B cell (primary cell): ENCODE measurements at regions of chr6 and their contacts with region 1.

Region 1: GRCh38 chr6:88238065-88238464 is 71.9 kb upstream of the CNR1 start:
- DNase-seq: peak; percentile 78
- ATAC-seq: peak; percentile 78
- H3K4me3 ChIP-seq: no peak overlapping the region
- H3K4me3 Mint-ChIP-seq: no peak overlapping the region
- H3K27ac ChIP-seq: no peak overlapping the region
- H3K27ac Mint-ChIP-seq: no peak overlapping the region
- H3K4me1 ChIP-seq: peaks cover 0 to 4% of the 10 kb centered on the region in 2 donors
- H3K4me1 Mint-ChIP-seq: peaks cover 7% of the 10 kb centered on the region
- H3K27me3 ChIP-seq: no peaks in the 10 kb centered on the region
- H3K27me3 Mint-ChIP-seq: no peaks in the 10 kb centered on the region
- CTCF ChIP-seq: peak; percentile 83

Region 2: DNA sequence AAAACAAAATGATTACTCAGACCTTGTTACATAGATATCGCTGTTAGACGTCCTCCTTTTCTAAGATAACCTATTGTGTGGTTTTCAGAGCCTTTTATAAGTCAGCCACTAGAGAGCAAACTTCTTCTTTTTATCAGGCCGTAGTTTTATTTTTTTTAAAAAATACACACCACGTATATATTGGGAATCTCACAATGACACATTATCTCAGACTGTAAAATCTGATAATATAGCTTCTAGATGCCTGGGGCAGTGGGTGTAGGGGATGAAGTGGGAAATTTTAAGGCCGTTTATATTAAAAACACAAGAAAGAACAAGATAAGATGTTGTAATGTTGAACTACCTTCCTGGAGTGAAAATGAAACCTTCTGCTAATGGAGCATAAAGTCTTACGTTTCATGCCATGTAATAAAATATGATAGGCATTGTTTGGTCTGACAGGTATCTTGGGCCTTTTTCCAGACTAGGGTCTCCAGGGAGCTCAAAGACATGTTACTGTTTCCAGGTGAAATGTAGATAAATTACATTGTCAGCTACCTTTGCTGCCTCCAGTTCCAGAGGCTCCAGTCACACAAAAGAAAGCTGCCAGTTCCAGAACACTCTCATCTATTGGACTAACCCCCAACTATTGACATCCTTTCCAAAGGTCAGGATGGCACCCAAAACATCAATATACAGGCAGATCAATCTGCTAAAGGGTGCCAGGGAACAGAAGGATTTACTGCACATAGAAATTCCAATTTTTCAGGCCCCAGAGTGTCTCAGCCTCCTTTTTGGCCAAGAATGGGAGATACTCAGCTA is 405.8 kb before region 1 on chr6:
- CTCF ChIA-PET with region 1: interaction called, 83 read pairs
- POLR2A ChIA-PET with region 1: no interaction called
- intact Hi-C with region 1: loop called (anchors 1 kb)
- DNase-seq: peak; percentile 73
- ATAC-seq: peak; percentile 74
- H3K4me3 ChIP-seq: peak overlapping the region; percentile 42 to 81 (median 64)
- H3K4me3 Mint-ChIP-seq: peak overlapping the region; percentile 89
- H3K27ac ChIP-seq: peak overlapping the region; percentile 74 to 89
- H3K27ac Mint-ChIP-seq: peak overlapping the region; percentile 78
- H3K4me1 ChIP-seq: peaks cover 6 to 7% of the 10 kb centered on the region in 2 donors
- H3K4me1 Mint-ChIP-seq: peaks cover 14% of the 10 kb centered on the region
- H3K27me3 ChIP-seq: no peaks in the 10 kb centered on the region
- H3K27me3 Mint-ChIP-seq: no peaks in the 10 kb centered on the region
- CTCF ChIP-seq: peak; percentile 76

Region 3: DNA sequence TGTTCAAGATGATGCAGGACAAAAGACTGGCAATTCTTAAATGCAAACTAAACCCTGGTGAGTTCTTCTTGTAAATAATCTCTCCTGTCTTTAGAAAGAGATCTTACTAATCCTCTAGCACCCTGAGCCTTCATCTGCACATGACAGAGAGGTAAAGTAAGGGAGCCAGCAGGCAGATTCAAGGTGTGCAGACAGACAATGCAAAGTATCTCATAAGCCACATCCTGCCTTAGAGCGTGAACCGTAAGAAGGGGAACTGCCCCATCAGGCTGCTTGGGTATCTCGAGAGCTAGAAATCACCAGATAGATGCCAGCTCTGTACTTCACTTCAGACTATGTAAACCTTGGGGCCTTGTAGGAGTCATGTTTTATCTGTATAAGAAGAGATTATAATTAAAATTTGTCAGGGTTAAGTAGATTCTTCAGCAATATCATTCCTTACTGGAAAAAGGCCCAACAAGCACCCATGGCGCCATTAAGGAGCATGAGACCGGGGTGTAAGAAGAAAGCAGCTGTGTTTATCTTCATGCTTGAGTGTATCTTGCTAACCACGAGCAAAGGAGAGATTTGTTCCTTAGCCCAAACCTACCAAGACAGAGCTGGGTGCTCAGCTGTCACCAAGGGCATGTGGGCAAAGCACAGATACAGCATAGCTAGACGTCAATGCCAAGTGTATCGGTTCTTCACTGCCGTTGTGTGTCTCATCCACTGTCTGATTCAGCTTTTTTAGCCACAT is 96.3 kb before region 1 on chr6:
- CTCF ChIA-PET with region 1: interaction called, 9 read pairs
- POLR2A ChIA-PET with region 1: no interaction called
- intact Hi-C with region 1: loop called (anchors 2 kb)
- DNase-seq: peak; percentile 91
- ATAC-seq: peak; percentile 91
- H3K4me3 ChIP-seq: peak overlapping the region in 2 of 5 experiments; percentile 30 to 33
- H3K4me3 Mint-ChIP-seq: peak overlapping the region; percentile 67
- H3K27ac ChIP-seq: peak overlapping the region; percentile 87 to 95
- H3K27ac Mint-ChIP-seq: peak overlapping the region; percentile 96
- H3K4me1 ChIP-seq: peaks cover 45 to 49% of the 10 kb centered on the region in 2 donors
- H3K4me1 Mint-ChIP-seq: peaks cover 56% of the 10 kb centered on the region
- H3K27me3 ChIP-seq: no peaks in the 10 kb centered on the region
- H3K27me3 Mint-ChIP-seq: no peaks in the 10 kb centered on the region
- CTCF ChIP-seq: no peak

Region 4: GRCh38 chr6:88780714-88781389 is 542.8 kb after region 1 on chr6:
- CTCF ChIA-PET with region 1: interaction called, 3 read pairs
- POLR2A ChIA-PET with region 1: no interaction called
- intact Hi-C with region 1: loop called (anchors 2 kb)
- DNase-seq: peak; percentile 82
- ATAC-seq: peak; percentile 81
- H3K4me3 ChIP-seq: no peak overlapping the region
- H3K4me3 Mint-ChIP-seq: no peak overlapping the region
- H3K27ac ChIP-seq: no peak overlapping the region
- H3K27ac Mint-ChIP-seq: no peak overlapping the region
- H3K4me1 ChIP-seq: peaks cover 0 to 13% of the 10 kb centered on the region in 2 donors
- H3K4me1 Mint-ChIP-seq: peaks cover 16% of the 10 kb centered on the region
- H3K27me3 ChIP-seq: no peaks in the 10 kb centered on the region
- H3K27me3 Mint-ChIP-seq: no peaks in the 10 kb centered on the region
- CTCF ChIP-seq: peak; percentile 90